ENCODE measurements at regions of chr15 and their contacts with region 1.

Region 1: GRCh38 chr15:82139823-82140268 is 94.0 kb upstream of the MEX3B start:
- DNase-seq: no peak
- ATAC-seq: peak in 3 of 4 donors; percentile 8 to 71 (median 47)
- H3K4me3 ChIP-seq: no peak overlapping the region
- H3K27ac ChIP-seq: no peak overlapping the region
- H3K4me1 ChIP-seq: no peaks in the 10 kb centered on the region
- H3K27me3 ChIP-seq: no peaks in the 10 kb centered on the region
- CTCF ChIP-seq: peak; percentile 67

Region 2: GRCh38 chr15:81887912-81888311 is 251.9 kb before region 1 on chr15:
- intact Hi-C with region 1: no loop called
- DNase-seq: no peak
- ATAC-seq: no peak
- H3K4me3 ChIP-seq: no peak overlapping the region
- H3K27ac ChIP-seq: no peak overlapping the region
- H3K4me1 ChIP-seq: peaks cover 6% of the 10 kb centered on the region
- H3K27me3 ChIP-seq: no peaks in the 10 kb centered on the region
- CTCF ChIP-seq: no peak

Region 3: GRCh38 chr15:82239685-82240391 is 100.0 kb after region 1 on chr15:
- intact Hi-C with region 1: loop called in 1 of 2 experiments (anchors 5 kb)
- DNase-seq: no peak
- ATAC-seq: no peak
- H3K4me3 ChIP-seq: no peak overlapping the region
- H3K27ac ChIP-seq: no peak overlapping the region
- H3K4me1 ChIP-seq: no peaks in the 10 kb centered on the region
- H3K27me3 ChIP-seq: no peaks in the 10 kb centered on the region
- CTCF ChIP-seq: no peak